ENCODE measurements at regions of chr1 and their contacts with region 1.

Region 1: GRCh38 chr1:39609618-39610331 is 29.7 kb downstream of the HEYL start:
- DNase-seq: no peak
- ATAC-seq: no peak
- H3K4me3 ChIP-seq: no peak overlapping the region
- H3K27ac ChIP-seq: no peak overlapping the region
- H3K4me1 ChIP-seq: peaks cover 2% of the 10 kb centered on the region; the same call in 1 of the 2 replicates
- H3K27me3 ChIP-seq: peaks cover 3% of the 10 kb centered on the region; the same call in 1 of the 2 replicates
- CTCF ChIP-seq: peak; percentile 54
- POLR2A ChIP-seq: no peak
- RAD21 ChIP-seq: peak; percentile 25; the same call in 1 of the 2 replicates

Region 2: DNA sequence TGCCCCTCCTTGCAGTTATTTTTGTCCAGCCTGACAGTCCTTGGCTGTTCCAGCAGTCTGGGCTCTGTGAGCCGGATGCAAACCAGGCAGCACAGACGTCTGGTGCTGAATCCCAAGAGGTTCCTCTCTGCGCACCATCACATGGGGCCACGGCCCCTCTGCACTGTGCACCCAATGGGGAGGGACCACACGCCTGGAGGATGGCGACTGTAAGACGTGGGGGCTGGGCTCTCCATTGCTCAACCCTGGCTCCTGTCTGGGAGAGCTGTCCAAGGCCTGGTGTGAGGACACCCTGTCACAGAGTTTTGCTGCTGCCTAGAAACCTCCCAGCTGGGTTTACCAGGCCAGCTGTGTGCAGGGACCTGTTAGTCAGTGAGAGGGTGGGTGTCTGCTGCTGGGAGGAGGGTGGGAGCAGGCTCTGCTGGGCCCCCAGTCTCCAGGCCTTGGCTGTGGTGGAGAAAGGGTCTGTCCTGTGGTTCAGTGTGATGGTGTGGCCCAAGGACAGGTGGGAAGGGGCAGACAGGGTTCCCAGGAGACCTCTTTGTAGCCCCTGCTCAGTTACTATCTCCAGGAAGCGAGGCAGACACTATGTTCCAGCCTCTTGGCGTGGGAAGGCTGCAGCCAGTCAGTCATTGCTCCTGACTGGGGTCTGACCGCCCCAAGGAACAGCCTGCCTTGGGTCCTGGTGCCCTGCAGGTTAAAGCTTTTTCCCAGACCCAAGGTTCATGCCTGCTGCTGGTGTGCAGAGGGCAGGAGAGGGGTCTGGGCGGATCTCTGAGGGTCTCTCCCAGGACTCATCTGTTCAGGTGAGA is 15.9 kb after region 1 on chr1:
- CTCF ChIA-PET with region 1: no interaction called
- POLR2A ChIA-PET with region 1: no interaction called
- dilution Hi-C with region 1: no loop called
- in situ Hi-C with region 1: no loop called
- intact Hi-C with region 1: no loop called
- DNase-seq: peak; percentile 53
- ATAC-seq: peak; percentile 84
- H3K4me3 ChIP-seq: no peak overlapping the region
- H3K27ac ChIP-seq: no peak overlapping the region
- H3K4me1 ChIP-seq: peaks cover 5% of the 10 kb centered on the region; the same call in 1 of the 2 replicates
- H3K27me3 ChIP-seq: peaks cover 31% of the 10 kb centered on the region
- CTCF ChIP-seq: no peak
- POLR2A ChIP-seq: no peak
- RAD21 ChIP-seq: no peak

Region 3: GRCh38 chr1:39646232-39647081 is 36.7 kb after region 1 on chr1:
- CTCF ChIA-PET with region 1: interaction called, 15 read pairs
- POLR2A ChIA-PET with region 1: no interaction called
- dilution Hi-C with region 1: no loop called
- in situ Hi-C with region 1: no loop called
- intact Hi-C with region 1: no loop called
- DNase-seq: peak; percentile 79
- ATAC-seq: peak; percentile 84
- H3K4me3 ChIP-seq: no peak overlapping the region
- H3K27ac ChIP-seq: peak overlapping the region; percentile 1; the same call in 1 of the 2 replicates
- H3K4me1 ChIP-seq: peaks cover 13% of the 10 kb centered on the region
- H3K27me3 ChIP-seq: peaks cover 2% of the 10 kb centered on the region; the same call in 1 of the 2 replicates
- CTCF ChIP-seq: no peak
- POLR2A ChIP-seq: no peak
- RAD21 ChIP-seq: no peak

Region 4: GRCh38 chr1:39653546-39654031 is 43.8 kb after region 1 on chr1:
- CTCF ChIA-PET with region 1: interaction called, 22 read pairs
- POLR2A ChIA-PET with region 1: no interaction called
- dilution Hi-C with region 1: no loop called
- in situ Hi-C with region 1: loop called (anchors 5 kb)
- intact Hi-C with region 1: loop called (anchors 1 kb)
- DNase-seq: peak; percentile 78
- ATAC-seq: peak; percentile 89
- H3K4me3 ChIP-seq: no peak overlapping the region
- H3K27ac ChIP-seq: no peak overlapping the region
- H3K4me1 ChIP-seq: no peaks in the 10 kb centered on the region; the same call in 1 of the 2 replicates
- H3K27me3 ChIP-seq: peaks cover 27% of the 10 kb centered on the region
- CTCF ChIP-seq: peak; percentile 92
- POLR2A ChIP-seq: no peak
- RAD21 ChIP-seq: peak; percentile 91

Region 5: GRCh38 chr1:39720094-39720999 is 110.6 kb after region 1 on chr1:
- CTCF ChIA-PET with region 1: interaction called, 3 read pairs
- POLR2A ChIA-PET with region 1: no interaction called
- dilution Hi-C with region 1: no loop called
- in situ Hi-C with region 1: no loop called
- intact Hi-C with region 1: loop called (anchors 1 kb)
- DNase-seq: peak; percentile 66
- ATAC-seq: peak; percentile 83
- H3K4me3 ChIP-seq: no peak overlapping the region
- H3K27ac ChIP-seq: no peak overlapping the region
- H3K4me1 ChIP-seq: no peaks in the 10 kb centered on the region
- H3K27me3 ChIP-seq: peaks cover 40% of the 10 kb centered on the region
- CTCF ChIP-seq: peak; percentile 82
- POLR2A ChIP-seq: no peak
- RAD21 ChIP-seq: peak; percentile 80

Region 6: GRCh38 chr1:39799770-39800470 is 190.1 kb after region 1 on chr1:
- CTCF ChIA-PET with region 1: no interaction called
- POLR2A ChIA-PET with region 1: no interaction called
- dilution Hi-C with region 1: no loop called
- in situ Hi-C with region 1: no loop called
- intact Hi-C with region 1: loop called (anchors 10 kb)
- DNase-seq: peak; percentile 84
- ATAC-seq: peak; percentile 90
- H3K4me3 ChIP-seq: no peak overlapping the region
- H3K27ac ChIP-seq: no peak overlapping the region
- H3K4me1 ChIP-seq: 0 out of 2 replicates have a peak, but pooled peaks cover 2% of the 10 kb centered on the region
- H3K27me3 ChIP-seq: peaks cover 15% of the 10 kb centered on the region
- CTCF ChIP-seq: peak; percentile 58
- POLR2A ChIP-seq: no peak
- RAD21 ChIP-seq: peak; percentile 51

Measured in IMR-90 (cell line).